Activated CD4-positive, alpha-beta memory T cell treated with anti-CD3 and anti-CD28 coated beads for 36 hours (primary cell): ENCODE measurements at regions of chr1 and their contacts with region 1.

Region 1: GRCh38 chr1:91929250-91929649 is 20.0 kb upstream of the BRDT start:
- DNase-seq: no peak
- H3K4me3 Mint-ChIP-seq: no peak overlapping the region
- H3K27ac Mint-ChIP-seq: no peak overlapping the region
- H3K4me1 Mint-ChIP-seq: peaks cover under 1% of the 10 kb centered on the region
- H3K27me3 Mint-ChIP-seq: no peaks in the 10 kb centered on the region

Region 2: GRCh38 chr1:91529856-91530255 is 399.4 kb before region 1 on chr1:
- CTCF ChIA-PET with region 1: interaction called, 3 read pairs
- POLR2A ChIA-PET with region 1: no interaction called
- intact Hi-C with region 1: loop called (anchors 5 kb)
- DNase-seq: no peak
- H3K4me3 Mint-ChIP-seq: no peak overlapping the region
- H3K27ac Mint-ChIP-seq: no peak overlapping the region
- H3K4me1 Mint-ChIP-seq: peaks cover 19% of the 10 kb centered on the region
- H3K27me3 Mint-ChIP-seq: no peaks in the 10 kb centered on the region

Region 3: DNA sequence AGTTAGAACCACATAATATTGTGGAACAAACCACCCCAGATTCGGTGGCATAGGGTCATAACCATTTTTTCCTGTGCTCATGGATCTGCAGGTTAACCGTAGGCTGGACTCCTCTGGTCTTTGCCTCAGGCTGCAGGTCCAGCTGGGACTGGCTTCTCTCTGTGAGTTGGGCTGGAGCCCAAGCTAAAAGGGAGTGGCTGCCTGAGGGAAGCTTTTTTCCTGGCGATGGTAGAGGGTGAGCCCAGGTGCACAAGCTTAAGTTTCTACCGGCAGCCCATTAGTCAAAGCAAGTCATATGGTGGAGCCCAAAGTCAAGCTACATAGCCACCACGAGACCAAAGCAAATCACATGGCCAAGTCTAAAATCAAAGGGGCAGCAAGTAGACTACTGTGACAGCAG is 114.4 kb after region 1 on chr1:
- CTCF ChIA-PET with region 1: no interaction called
- POLR2A ChIA-PET with region 1: no interaction called
- intact Hi-C with region 1: no loop called
- DNase-seq: no peak
- H3K4me3 Mint-ChIP-seq: no peak overlapping the region
- H3K27ac Mint-ChIP-seq: no peak overlapping the region
- H3K4me1 Mint-ChIP-seq: no peaks in the 10 kb centered on the region
- H3K27me3 Mint-ChIP-seq: no peaks in the 10 kb centered on the region